Esophagus muscularis mucosa (tissue), 4 donors: ENCODE measurements at regions of chr11 and their contacts with region 1.

Region 1: DNA sequence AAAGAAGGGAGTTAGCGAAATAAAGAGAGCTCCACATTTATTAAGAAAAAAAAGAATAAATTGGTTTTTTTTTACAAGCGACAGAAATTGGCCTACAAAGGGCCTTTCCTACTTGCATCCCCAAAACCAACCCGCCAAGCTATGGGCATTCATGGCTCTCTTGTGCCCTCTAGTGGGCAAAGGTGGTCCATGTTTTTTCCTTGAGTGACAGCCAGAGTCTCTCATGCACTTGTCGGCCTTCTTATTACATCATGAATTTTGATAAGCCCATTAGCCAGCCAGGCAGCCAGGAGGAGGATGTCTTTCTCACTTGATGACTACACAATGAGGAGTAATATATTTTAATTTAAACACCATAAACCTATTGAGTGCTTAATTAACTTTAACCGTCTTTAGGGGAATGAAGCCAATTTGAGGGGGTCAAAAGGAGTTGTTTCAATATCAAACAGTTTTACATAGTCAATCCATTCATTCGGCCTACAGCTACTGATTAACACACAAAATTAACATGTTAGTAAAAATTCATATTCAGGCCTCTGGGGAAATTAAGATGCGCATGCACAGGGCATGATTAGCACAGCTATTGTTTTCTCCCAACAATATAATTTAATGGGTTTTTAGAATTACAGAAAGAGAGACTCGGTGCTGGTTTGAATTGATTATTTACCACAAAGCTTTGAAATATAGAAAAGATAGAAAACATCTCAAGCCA is 85.5 kb downstream of the RCN1 start:
- DNase-seq: no peak
- H3K4me3 ChIP-seq: no peak overlapping the region
- H3K27ac ChIP-seq: no peak overlapping the region
- H3K4me1 ChIP-seq: peaks cover 0 to 11% (median 5%) of the 10 kb centered on the region in 4 donors
- H3K27me3 ChIP-seq: peaks cover 0 to 2% (median 0%) of the 10 kb centered on the region in 4 donors
- CTCF ChIP-seq: peak; percentile 82 to 89 (median 86)
- EP300 ChIP-seq: no peak
- POLR2A ChIP-seq: no peak

Region 2: DNA sequence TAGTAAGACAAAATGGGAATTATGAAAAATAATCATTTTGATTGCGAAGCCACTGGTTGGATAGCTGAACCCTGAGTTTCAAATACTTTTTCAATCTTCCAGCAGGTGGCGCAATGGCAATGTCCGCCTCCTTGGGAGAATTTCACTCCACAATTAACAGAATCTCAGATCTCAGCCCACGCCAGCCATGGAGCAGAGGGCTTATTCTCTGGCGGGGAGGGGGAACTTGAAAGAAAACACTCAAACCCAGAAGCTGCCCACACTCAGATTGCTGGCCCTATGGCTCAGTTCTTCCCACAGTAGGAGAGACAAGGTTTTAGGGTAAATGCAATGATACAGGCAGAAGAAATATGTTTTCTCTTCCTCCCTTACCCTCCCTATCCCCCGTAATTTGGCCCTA is 124.2 kb before region 1 on chr11:
- intact Hi-C with region 1: loop called (anchors 1 kb)
- DNase-seq: no peak
- H3K4me3 ChIP-seq: no peak overlapping the region
- H3K27ac ChIP-seq: no peak overlapping the region
- H3K4me1 ChIP-seq: peaks cover 0 to 2% (median 0%) of the 10 kb centered on the region in 4 donors
- H3K27me3 ChIP-seq: peaks cover 0 to 17% (median 0%) of the 10 kb centered on the region in 4 donors
- CTCF ChIP-seq: peak; percentile 59 to 77 (median 76)
- EP300 ChIP-seq: no peak
- POLR2A ChIP-seq: no peak